GM12878 (cell line): ENCODE measurements at regions of chr14 and their contacts with region 1.

Region 1: DNA sequence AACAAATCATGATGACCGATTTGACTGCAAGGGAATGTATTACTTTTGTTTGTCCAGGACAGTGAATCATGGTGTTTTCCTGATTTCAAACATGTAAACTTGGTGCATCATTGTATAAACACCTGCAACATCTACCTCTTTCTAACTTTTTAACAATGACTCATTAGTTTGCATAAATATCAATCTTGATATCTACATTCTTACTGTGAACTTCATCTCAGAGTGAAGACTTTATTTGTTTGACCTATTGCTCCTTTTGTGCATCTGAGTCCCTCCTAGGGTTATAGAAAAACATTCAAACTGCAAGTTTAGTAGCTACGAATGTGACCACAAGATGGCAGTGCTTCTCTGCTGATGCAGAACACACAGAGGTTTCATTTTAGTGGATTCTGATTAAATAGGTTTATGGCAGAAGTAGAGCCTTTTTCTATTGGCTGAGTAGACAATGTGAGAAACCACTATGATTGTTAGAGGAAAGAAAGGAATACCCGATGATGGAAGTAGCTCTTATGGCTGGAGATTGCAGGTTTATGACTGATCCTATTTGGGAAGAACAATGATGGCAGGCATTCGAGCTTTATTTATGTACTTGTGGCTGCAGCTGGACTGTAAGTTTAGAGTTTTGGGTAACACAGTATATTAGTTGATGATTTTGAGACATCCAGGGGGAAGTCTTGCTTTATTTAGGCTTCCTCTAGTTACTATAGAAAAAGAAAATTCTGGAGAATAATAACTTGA is 244.2 kb upstream of the OR4E1 start:
- DNase-seq: peak; percentile 3
- ATAC-seq: peak; percentile 87
- H3K4me3 ChIP-seq: no peak overlapping the region
- H3K27ac ChIP-seq: no peak overlapping the region
- H3K4me1 ChIP-seq: no peaks in the 10 kb centered on the region
- H3K27me3 ChIP-seq: no peaks in the 10 kb centered on the region
- CTCF ChIP-seq: peak; percentile 70 to 89 (median 74)
- EP300 ChIP-seq: no peak
- POLR2A ChIP-seq: no peak
- RAD21 ChIP-seq: peak; percentile 65

Region 2: DNA sequence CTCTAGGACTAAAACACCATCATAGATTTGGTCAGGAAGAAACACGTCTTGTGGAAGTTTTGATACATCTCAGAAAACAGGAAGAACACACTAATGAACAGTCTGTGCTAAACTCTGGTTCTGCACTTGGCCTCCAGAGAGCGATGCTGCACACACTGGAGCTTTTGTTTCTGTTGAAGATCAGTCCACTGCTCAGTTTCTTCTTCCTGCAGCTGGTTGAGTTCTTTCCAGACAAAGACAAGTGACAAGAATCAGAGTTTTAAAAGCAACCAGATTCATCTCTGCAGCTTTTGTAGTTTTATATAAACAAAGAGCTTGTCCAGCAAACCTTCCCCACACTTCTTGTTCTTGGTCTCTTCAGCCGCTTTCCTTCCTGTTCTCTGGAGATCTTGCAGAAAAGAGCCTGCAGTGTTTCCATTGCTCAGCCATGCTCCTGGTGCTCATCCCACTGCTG is 15.2 kb before region 1 on chr14:
- CTCF ChIA-PET with region 1: interaction called, 17 read pairs
- POLR2A ChIA-PET with region 1: no interaction called
- RAD21 ChIA-PET with region 1: interaction called, 3 read pairs
- SMC1A ChIA-PET with region 1: interaction called, 3 read pairs
- in situ Hi-C with region 1: no loop called
- intact Hi-C with region 1: no loop called
- DNase-seq: no peak
- ATAC-seq: 0 out of 3 replicates have a peak, but pooled peaks have one; percentile 40
- H3K4me3 ChIP-seq: no peak overlapping the region
- H3K27ac ChIP-seq: no peak overlapping the region
- H3K4me1 ChIP-seq: no peaks in the 10 kb centered on the region
- H3K27me3 ChIP-seq: no peaks in the 10 kb centered on the region
- CTCF ChIP-seq: peak; percentile 15 to 41 (median 18); a peak in 2 of 6 replicates
- EP300 ChIP-seq: no peak
- POLR2A ChIP-seq: no peak
- RAD21 ChIP-seq: no peak